Heart left ventricle (tissue), 16 donors: ENCODE measurements at regions of chr11 and their contacts with region 1.

Region 1: DNA sequence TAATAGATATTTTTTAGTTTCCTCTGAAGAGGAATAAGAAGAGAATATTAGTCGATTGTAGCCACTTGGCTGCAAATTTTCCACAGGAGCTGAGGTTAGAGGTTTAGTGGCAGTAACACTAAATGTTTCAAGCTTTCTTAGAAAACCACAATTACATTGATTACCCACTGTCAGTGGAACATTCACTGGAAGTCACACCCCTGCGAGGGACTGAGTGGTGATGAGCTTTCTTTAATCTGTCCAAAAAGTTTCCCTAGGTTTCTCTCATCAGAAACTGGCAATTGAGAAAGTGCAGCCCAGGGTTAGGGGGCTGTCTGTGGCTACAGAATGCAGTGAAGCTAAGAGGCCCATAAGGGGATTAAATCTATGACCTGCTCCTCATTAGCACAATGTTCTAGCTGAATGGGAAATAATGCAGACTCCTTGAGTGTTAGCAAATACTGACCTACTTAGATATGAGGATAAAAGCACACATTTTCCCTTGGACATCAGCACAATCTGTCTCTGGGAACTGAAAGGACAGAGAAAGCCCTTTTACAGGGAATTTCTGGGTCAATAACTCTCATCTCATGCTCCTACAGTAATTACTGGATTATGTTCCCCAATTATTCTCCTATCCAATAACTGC is 189.5 kb downstream of the FAM76B start:
- DNase-seq: no peak
- ATAC-seq: no peak
- H3K4me3 ChIP-seq: no peak overlapping the region
- H3K27ac ChIP-seq: no peak overlapping the region
- H3K4me1 ChIP-seq: no peaks in the 10 kb centered on the region
- H3K27me3 ChIP-seq: no peaks in the 10 kb centered on the region
- CTCF ChIP-seq: no peak
- POLR2A ChIP-seq: no peak

Region 2: GRCh38 chr11:95067039-95067840 is 532.8 kb before region 1 on chr11:
- intact Hi-C with region 1: no loop called
- DNase-seq: peak; percentile 85 to 93 (median 89)
- ATAC-seq: peak; percentile 65 to 91 (median 86)
- H3K4me3 ChIP-seq: peak overlapping the region; percentile 62 to 92 (median 78)
- H3K27ac ChIP-seq: peak overlapping the region; percentile 93 to 99 (median 96)
- H3K4me1 ChIP-seq: peaks cover 3 to 24% (median 13%) of the 10 kb centered on the region in 12 donors
- H3K27me3 ChIP-seq: no peaks in the 10 kb centered on the region
- CTCF ChIP-seq: peak; percentile 35 to 83 (median 62)
- POLR2A ChIP-seq: peak in 1 of 2 donors; percentile 49

Region 3: DNA sequence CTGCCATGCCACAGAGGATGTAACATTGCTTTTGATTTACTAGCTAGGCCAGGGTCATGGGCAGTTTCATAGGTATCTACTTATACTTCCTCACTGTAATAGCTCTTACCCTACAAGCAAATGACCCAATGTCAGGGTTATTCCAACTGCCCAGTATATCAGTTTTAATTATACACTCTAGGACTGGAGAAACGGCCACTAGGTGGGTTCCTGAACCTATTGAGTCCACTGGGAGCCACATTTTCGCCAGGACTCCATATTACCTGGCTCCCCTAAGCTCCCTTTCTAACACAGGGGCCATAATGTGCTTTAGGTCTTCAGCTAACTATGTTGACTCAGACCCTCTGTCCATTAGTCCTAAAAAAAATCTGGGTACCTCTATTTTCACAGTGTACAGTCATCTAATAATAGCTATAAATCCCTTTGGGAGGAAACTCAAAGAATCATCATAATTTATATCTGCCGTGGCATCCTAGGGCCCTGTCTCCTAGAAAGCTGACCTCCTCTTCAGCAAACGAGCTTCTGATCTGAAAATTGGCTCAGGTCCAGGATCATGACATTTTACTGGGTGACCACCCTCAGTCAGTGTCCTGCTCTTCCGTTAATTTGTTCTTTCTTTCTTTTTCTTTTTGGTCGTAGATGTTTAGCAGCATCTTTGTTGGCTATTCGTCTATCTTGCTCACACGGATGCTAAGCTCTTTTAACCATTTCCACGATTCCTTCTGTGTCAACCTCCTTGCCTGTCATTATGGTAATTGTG is 54.8 kb before region 1 on chr11:
- intact Hi-C with region 1: loop called in 1 of 10 experiments (anchors 10 kb)
- DNase-seq: no peak
- ATAC-seq: no peak
- H3K4me3 ChIP-seq: no peak overlapping the region
- H3K27ac ChIP-seq: no peak overlapping the region
- H3K4me1 ChIP-seq: peaks cover 0 to 9% (median 0%) of the 10 kb centered on the region in 12 donors
- H3K27me3 ChIP-seq: no peaks in the 10 kb centered on the region
- CTCF ChIP-seq: no peak
- POLR2A ChIP-seq: no peak

Region 4: GRCh38 chr11:95764267-95764898 is 164.3 kb after region 1 on chr11:
- intact Hi-C with region 1: no loop called
- DNase-seq: no peak
- ATAC-seq: peak in 3 of 4 donors; percentile 61 to 69 (median 62)
- H3K4me3 ChIP-seq: no peak overlapping the region
- H3K27ac ChIP-seq: no peak overlapping the region
- H3K4me1 ChIP-seq: peaks cover 0 to 16% (median 0%) of the 10 kb centered on the region in 12 donors
- H3K27me3 ChIP-seq: no peaks in the 10 kb centered on the region
- CTCF ChIP-seq: peak; percentile 56 to 85 (median 71)
- POLR2A ChIP-seq: no peak